Vagina (tissue), 2 donors: ENCODE measurements at regions of chr3 and their contacts with region 1.

Region 1: GRCh38 chr3:66195347-66195783 is 25.4 kb upstream of the SLC25A26 start:
- DNase-seq: no peak
- H3K4me3 ChIP-seq: no peak overlapping the region
- H3K27ac ChIP-seq: no peak overlapping the region
- H3K4me1 ChIP-seq: no peaks in the 10 kb centered on the region
- H3K27me3 ChIP-seq: no peaks in the 10 kb centered on the region
- CTCF ChIP-seq: no peak
- POLR2A ChIP-seq: no peak

Region 2: GRCh38 chr3:64295594-64295993 is 1899.8 kb before region 1 on chr3:
- intact Hi-C with region 1: loop called (anchors 5 kb)
- DNase-seq: no peak
- H3K4me3 ChIP-seq: no peak overlapping the region
- H3K27ac ChIP-seq: peak overlapping the region; percentile 45
- H3K4me1 ChIP-seq: peaks cover 32% of the 10 kb centered on the region
- H3K27me3 ChIP-seq: no peaks in the 10 kb centered on the region
- CTCF ChIP-seq: no peak
- POLR2A ChIP-seq: no peak

Region 3: GRCh38 chr3:66762916-66763710 is 567.7 kb after region 1 on chr3:
- intact Hi-C with region 1: no loop called
- DNase-seq: peak in 1 of 2 donors; percentile 93
- H3K4me3 ChIP-seq: no peak overlapping the region
- H3K27ac ChIP-seq: no peak overlapping the region
- H3K4me1 ChIP-seq: peaks cover 13% of the 10 kb centered on the region
- H3K27me3 ChIP-seq: no peaks in the 10 kb centered on the region
- CTCF ChIP-seq: no peak
- POLR2A ChIP-seq: no peak